Naive thymus-derived CD4-positive, alpha-beta T cell (primary cell): ENCODE measurements at regions of chr9 and their contacts with region 1.

Region 1: GRCh38 chr9:33076358-33077004 is at the start of gene SMU1:
- DNase-seq: peak; percentile 82 to 97 (median 95)
- ATAC-seq: peak; percentile 97
- H3K4me3 ChIP-seq: peak within 1 kb of the TSS; percentile 82
- H3K4me3 Mint-ChIP-seq: peak within 1 kb of the TSS; percentile 95 to 100 (median 98)
- H3K27ac ChIP-seq: peak within 1 kb of the TSS; percentile 93
- H3K27ac Mint-ChIP-seq: peak within 1 kb of the TSS; percentile 97 to 100 (median 99)
- H3K4me1 ChIP-seq: peaks cover 16 to 21% of the 10 kb centered on the region in 2 donors
- H3K4me1 Mint-ChIP-seq: peaks cover 17 to 61% (median 48%) of the 10 kb centered on the region in 7 donors
- H3K27me3 ChIP-seq: no peaks in the 10 kb centered on the region
- H3K27me3 Mint-ChIP-seq: no peaks in the 10 kb centered on the region
- total RNA-seq, gene SMU1: 22.3 to 32.9 (median 25.6) TPM

Region 2: DNA sequence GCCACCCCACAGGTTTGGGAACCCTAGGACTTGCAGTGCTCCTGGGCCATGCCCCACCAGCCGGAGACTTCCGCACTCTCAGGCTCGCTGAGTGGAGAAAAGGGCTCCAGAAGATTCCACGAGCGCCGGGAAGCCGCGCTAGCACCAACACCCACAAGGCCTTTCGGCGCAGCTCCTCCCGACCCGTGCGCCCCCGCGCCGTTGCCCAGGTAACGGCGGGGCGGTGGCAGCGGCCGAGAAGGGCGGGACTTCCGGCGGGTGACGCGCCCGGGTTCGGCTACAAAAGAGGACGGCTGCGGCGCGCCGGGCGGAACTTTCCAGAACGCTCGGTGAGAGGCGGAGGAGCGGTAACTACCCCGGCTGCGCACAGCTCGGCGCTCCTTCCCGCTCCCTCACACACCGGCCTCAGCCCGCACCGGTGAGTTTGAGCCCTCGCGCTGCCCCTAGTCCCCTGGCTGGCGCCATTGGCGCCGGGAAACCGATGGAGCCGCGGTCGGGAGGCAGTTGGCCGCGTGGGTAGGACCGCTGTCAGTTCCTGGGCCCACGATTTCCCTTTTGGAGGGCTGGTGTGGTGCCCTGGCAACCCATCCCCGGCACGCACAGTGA is 51.4 kb before region 1 on chr9 and contains the start of gene DNAJA1:
- CTCF ChIA-PET with region 1: no interaction called
- POLR2A ChIA-PET with region 1: interaction called, 11 read pairs
- intact Hi-C with region 1: loop called (anchors 1 kb)
- DNase-seq: peak; percentile 92 to 99 (median 97)
- ATAC-seq: peak; percentile 91
- H3K4me3 ChIP-seq: peak within 1 kb of the TSS; percentile 98
- H3K4me3 Mint-ChIP-seq: peak within 1 kb of the TSS; percentile 91 to 99 (median 96)
- H3K27ac ChIP-seq: peak within 1 kb of the TSS; percentile 100
- H3K27ac Mint-ChIP-seq: peak within 1 kb of the TSS; percentile 82 to 98 (median 95)
- H3K4me1 ChIP-seq: peaks cover 37 to 49% of the 10 kb centered on the region in 2 donors
- H3K4me1 Mint-ChIP-seq: peaks cover 51 to 83% (median 78%) of the 10 kb centered on the region in 7 donors
- H3K27me3 ChIP-seq: no peaks in the 10 kb centered on the region
- H3K27me3 Mint-ChIP-seq: no peaks in the 10 kb centered on the region
- total RNA-seq, gene DNAJA1: 66.8 to 204 (median 119) TPM

Region 3: GRCh38 chr9:33116860-33117259 is 40.4 kb after region 1 on chr9:
- CTCF ChIA-PET with region 1: no interaction called
- POLR2A ChIA-PET with region 1: no interaction called
- intact Hi-C with region 1: loop called in 1 of 2 experiments (anchors 5 kb)
- DNase-seq: no peak
- ATAC-seq: peak; percentile 35
- H3K4me3 ChIP-seq: no peak overlapping the region
- H3K4me3 Mint-ChIP-seq: peak overlapping the region in 3 of 10 donors; percentile 41 to 76 (median 61)
- H3K27ac ChIP-seq: no peak overlapping the region
- H3K27ac Mint-ChIP-seq: peak overlapping the region in 6 of 9 donors; percentile 3 to 81 (median 62)
- H3K4me1 ChIP-seq: peaks cover 13 to 16% of the 10 kb centered on the region in 2 donors
- H3K4me1 Mint-ChIP-seq: peaks cover 21 to 42% (median 30%) of the 10 kb centered on the region in 7 donors
- H3K27me3 ChIP-seq: no peaks in the 10 kb centered on the region
- H3K27me3 Mint-ChIP-seq: no peaks in the 10 kb centered on the region

Region 4: GRCh38 chr9:33159760-33160127 is 83.3 kb after region 1 on chr9:
- CTCF ChIA-PET with region 1: interaction called, 3 read pairs
- POLR2A ChIA-PET with region 1: interaction called, 6 read pairs
- intact Hi-C with region 1: loop called in 1 of 2 experiments (anchors 2 kb)
- DNase-seq: peak in 8 of 9 donors; percentile 59 to 74 (median 66)
- ATAC-seq: peak; percentile 77
- H3K4me3 ChIP-seq: peak overlapping the region; percentile 2
- H3K4me3 Mint-ChIP-seq: peak overlapping the region; percentile 64 to 86 (median 78)
- H3K27ac ChIP-seq: peak overlapping the region; percentile 91
- H3K27ac Mint-ChIP-seq: peak overlapping the region; percentile 88 to 99 (median 97)
- H3K4me1 ChIP-seq: peaks cover 80 to 93% of the 10 kb centered on the region in 2 donors
- H3K4me1 Mint-ChIP-seq: peaks cover 74 to 99% (median 94%) of the 10 kb centered on the region in 7 donors
- H3K27me3 ChIP-seq: no peaks in the 10 kb centered on the region
- H3K27me3 Mint-ChIP-seq: no peaks in the 10 kb centered on the region

Region 5: DNA sequence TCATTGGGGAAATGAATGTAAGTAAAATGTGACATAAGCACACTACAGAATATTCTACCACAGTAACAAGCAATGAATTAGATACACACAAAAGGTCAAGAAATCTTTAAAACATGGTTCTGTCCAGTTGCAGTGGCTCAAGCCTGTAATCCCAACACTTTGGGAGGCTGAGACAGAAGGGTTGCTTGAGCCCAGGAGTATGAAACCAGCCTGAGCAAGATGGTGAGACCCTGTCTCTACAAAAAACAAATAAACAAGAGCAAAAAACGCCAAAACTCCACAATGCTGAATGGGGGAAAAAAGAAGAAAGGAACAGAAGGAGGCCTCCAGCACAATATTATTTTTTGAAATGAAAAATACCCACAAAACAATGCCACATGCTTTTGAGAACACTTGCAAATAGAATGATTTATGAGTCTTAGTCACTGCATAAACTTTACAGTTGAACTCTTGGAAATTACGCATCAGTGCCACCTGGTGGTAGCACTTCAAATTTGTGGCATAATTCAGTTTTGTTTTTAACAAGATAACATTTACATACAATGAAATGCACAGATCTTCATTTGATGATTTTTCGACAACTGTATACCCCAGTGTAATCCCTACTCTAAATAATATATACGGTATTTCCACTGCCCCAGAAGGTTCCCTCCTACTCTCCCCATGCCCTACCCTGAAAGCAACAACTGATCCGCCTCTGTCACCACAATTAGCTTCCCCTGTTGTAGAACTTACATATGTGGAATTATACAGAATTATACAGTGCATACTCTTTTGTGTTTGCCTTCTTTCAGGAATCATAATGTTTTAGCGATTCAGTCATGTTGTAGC is 149.1 kb after region 1 on chr9:
- CTCF ChIA-PET with region 1: interaction called, 18 read pairs
- POLR2A ChIA-PET with region 1: interaction called, 7 read pairs
- intact Hi-C with region 1: loop called (anchors 1 kb)
- DNase-seq: peak; percentile 36 to 73 (median 65)
- ATAC-seq: peak; percentile 76
- H3K4me3 ChIP-seq: no peak overlapping the region
- H3K4me3 Mint-ChIP-seq: no peak overlapping the region
- H3K27ac ChIP-seq: no peak overlapping the region
- H3K27ac Mint-ChIP-seq: peak overlapping the region in 3 of 9 donors; percentile 14 to 68 (median 25)
- H3K4me1 ChIP-seq: peaks cover 0 to 3% of the 10 kb centered on the region in 2 donors
- H3K4me1 Mint-ChIP-seq: peaks cover 10 to 35% (median 18%) of the 10 kb centered on the region in 7 donors
- H3K27me3 ChIP-seq: no peaks in the 10 kb centered on the region
- H3K27me3 Mint-ChIP-seq: peaks cover 0 to 6% (median 0%) of the 10 kb centered on the region in 5 donors

Region 6: GRCh38 chr9:34363619-34364351 is 1287.3 kb after region 1 on chr9:
- CTCF ChIA-PET with region 1: no interaction called
- POLR2A ChIA-PET with region 1: no interaction called
- intact Hi-C with region 1: no loop called
- DNase-seq: peak in 7 of 9 donors; percentile 23 to 65 (median 53)
- ATAC-seq: peak; percentile 85
- H3K4me3 ChIP-seq: no peak overlapping the region
- H3K4me3 Mint-ChIP-seq: peak overlapping the region; percentile 26 to 79 (median 53)
- H3K27ac ChIP-seq: peak overlapping the region; percentile 22
- H3K27ac Mint-ChIP-seq: peak overlapping the region; percentile 24 to 87 (median 73)
- H3K4me1 ChIP-seq: peaks cover 0 to 21% of the 10 kb centered on the region in 2 donors
- H3K4me1 Mint-ChIP-seq: peaks cover 14 to 29% (median 20%) of the 10 kb centered on the region in 7 donors
- H3K27me3 ChIP-seq: no peaks in the 10 kb centered on the region
- H3K27me3 Mint-ChIP-seq: no peaks in the 10 kb centered on the region